ENCODE measurements at regions of chr7 and their contacts with region 1.

Region 1: GRCh38 chr7:46885121-46885520 is 696.8 kb downstream of the TNS3 start:
- DNase-seq: no peak
- H3K4me3 ChIP-seq: no peak overlapping the region
- H3K27ac ChIP-seq: no peak overlapping the region
- H3K4me1 ChIP-seq: no peaks in the 10 kb centered on the region
- H3K27me3 ChIP-seq: no peaks in the 10 kb centered on the region
- CTCF ChIP-seq: no peak
- EP300 ChIP-seq: no peak
- POLR2A ChIP-seq: no peak

Region 2: DNA sequence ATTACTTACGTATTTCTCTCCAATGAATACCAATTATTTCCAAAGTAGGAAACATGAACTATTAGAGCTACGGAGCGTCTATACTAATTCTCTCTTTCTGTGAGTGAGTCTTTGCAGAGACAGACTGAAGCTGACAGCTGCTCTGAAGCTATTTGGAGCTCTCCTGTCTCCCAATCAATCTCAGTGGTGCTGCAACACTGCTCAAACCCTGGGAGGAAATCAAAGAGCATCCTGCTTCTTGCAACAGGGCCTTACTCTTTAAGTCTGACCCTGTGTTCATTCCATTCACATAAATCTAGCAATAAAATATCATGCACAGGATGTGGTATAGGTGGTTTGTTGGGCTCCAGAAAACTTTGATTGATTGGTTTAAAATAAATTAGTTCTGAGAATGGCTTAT is 278.4 kb before region 1 on chr7:
- intact Hi-C with region 1: loop called in 1 of 4 experiments (anchors 5 kb)
- DNase-seq: no peak
- H3K4me3 ChIP-seq: no peak overlapping the region
- H3K27ac ChIP-seq: no peak overlapping the region
- H3K4me1 ChIP-seq: peaks cover 10% of the 10 kb centered on the region
- H3K27me3 ChIP-seq: no peaks in the 10 kb centered on the region
- CTCF ChIP-seq: no peak
- EP300 ChIP-seq: no peak
- POLR2A ChIP-seq: no peak

Region 3: GRCh38 chr7:47008461-47008860 is 123.3 kb after region 1 on chr7:
- intact Hi-C with region 1: no loop called
- DNase-seq: no peak
- H3K4me3 ChIP-seq: no peak overlapping the region
- H3K27ac ChIP-seq: no peak overlapping the region
- H3K4me1 ChIP-seq: no peaks in the 10 kb centered on the region
- H3K27me3 ChIP-seq: peaks cover 3% of the 10 kb centered on the region
- CTCF ChIP-seq: no peak
- EP300 ChIP-seq: no peak
- POLR2A ChIP-seq: no peak

Measured in ovary (tissue), 10 donors.